ENCODE measurements at regions of chr19 and their contacts with region 1.

Region 1: GRCh38 chr19:39177110-39177699 is 19.6 kb upstream of the NCCRP1 start:
- H3K4me3 ChIP-seq: no peak overlapping the region
- H3K27ac ChIP-seq: no peak overlapping the region
- H3K4me1 ChIP-seq: no peaks in the 10 kb centered on the region
- CTCF ChIP-seq: no peak

Region 2: GRCh38 chr19:39145180-39145953 is 31.8 kb before region 1 on chr19:
- CTCF ChIA-PET with region 1: no interaction called
- POLR2A ChIA-PET with region 1: no interaction called
- H3K4me3 ChIP-seq: no peak overlapping the region
- H3K27ac ChIP-seq: peak overlapping the region; percentile 24; the same call in 1 of the 2 replicates
- H3K4me1 ChIP-seq: peaks cover 12% of the 10 kb centered on the region
- CTCF ChIP-seq: no peak

Region 3: GRCh38 chr19:39187559-39187957 is 10.4 kb after region 1 on chr19:
- CTCF ChIA-PET with region 1: interaction called, 33 read pairs
- POLR2A ChIA-PET with region 1: no interaction called
- H3K4me3 ChIP-seq: no peak overlapping the region
- H3K27ac ChIP-seq: 0 out of 2 replicates have a peak overlapping the region, but pooled peaks have one; percentile 24
- H3K4me1 ChIP-seq: 0 out of 2 replicates have a peak, but pooled peaks cover 4% of the 10 kb centered on the region
- CTCF ChIP-seq: no peak

Region 4: DNA sequence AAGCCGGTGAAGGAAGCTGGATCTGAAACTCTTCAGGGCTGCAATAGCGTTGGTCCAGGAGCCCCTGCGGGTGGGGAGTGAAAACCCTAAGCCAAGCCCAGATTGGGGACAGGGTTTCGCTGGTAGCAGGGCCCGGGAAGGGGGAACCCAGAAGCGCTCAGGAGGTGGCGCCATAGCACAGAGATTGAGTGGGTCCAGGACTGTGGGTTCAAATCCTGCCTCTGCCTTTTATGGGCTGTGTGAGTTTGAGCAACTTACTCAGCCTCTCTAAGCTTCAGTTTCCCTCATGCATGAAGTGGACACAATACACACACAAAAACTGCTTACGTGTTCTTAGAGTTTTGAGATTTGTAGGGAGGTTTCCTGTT is 35.2 kb after region 1 on chr19:
- CTCF ChIA-PET with region 1: no interaction called
- POLR2A ChIA-PET with region 1: no interaction called
- H3K4me3 ChIP-seq: no peak overlapping the region
- H3K27ac ChIP-seq: no peak overlapping the region
- H3K4me1 ChIP-seq: no peaks in the 10 kb centered on the region
- CTCF ChIP-seq: peak; percentile 76

Region 5: DNA sequence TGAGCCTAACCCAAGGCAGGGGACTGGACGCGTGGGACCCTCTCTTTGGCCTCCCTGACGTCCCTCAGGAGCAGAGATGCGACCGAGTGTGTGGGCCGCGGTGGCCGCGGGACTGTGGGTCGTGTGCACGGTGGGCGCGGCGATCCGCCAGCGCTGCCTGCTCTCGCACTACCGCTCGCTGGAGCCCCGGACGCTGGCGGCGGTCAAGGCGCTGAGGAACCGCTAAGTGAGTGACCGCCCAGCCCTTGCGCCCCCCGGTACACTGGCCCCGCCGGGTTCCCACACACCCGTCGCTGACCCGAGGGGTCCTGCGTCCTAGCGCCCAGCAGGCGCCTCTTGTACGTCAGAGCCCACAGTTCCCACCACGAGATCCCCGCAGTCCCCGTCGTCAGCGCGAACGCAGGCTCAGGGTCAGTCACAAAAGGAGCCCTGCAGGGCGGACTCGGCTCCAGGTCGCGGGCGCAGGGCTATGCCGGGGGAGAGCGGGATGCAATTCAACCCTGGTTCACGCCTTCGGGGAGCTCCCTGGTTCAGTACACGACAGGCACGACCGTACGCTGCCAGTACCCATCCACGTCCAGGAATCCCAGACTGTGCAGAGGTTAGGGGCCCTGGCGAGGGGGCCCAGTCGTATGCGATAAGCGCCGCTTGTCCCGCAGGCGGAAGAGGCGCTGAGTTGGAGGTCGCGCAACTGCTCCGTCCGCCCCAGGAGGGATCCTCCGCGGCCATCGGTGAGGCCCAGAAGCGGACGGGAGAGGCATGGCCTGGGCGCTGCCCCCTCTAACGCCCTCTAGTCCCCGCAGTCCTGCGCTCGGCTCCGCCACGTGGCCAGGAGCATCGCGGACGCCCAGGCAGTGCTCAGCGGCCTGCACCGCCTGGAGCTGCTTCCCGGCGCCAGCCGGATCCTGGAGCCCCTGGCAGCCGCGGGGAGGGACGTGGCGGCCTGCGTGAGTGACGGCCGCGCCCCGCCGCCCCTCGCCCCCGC is 87.4 kb after region 1 on chr19:
- CTCF ChIA-PET with region 1: no interaction called
- POLR2A ChIA-PET with region 1: no interaction called
- H3K4me3 ChIP-seq: no peak overlapping the region
- H3K27ac ChIP-seq: no peak overlapping the region
- H3K4me1 ChIP-seq: no peaks in the 10 kb centered on the region
- CTCF ChIP-seq: 0 out of 2 replicates have a peak, but pooled peaks have one; percentile 1

Measured in HEK293 (cell line).